ENCODE measurements at regions of chr7 and their contacts with region 1.

Region 1: GRCh38 chr7:24732646-24733413 is 24.4 kb downstream of the GSDME start:
- DNase-seq: peak in 1 of 2 experiments; percentile 71
- ATAC-seq: peak; percentile 89
- H3K4me3 ChIP-seq: no peak overlapping the region
- H3K27ac ChIP-seq: peak overlapping the region; percentile 86 to 89
- H3K4me1 ChIP-seq: peaks cover 42% of the 10 kb centered on the region
- CTCF ChIP-seq: no peak
- EP300 ChIP-seq: no peak
- POLR2A ChIP-seq: no peak
- RAD21 ChIP-seq: no peak

Region 2: DNA sequence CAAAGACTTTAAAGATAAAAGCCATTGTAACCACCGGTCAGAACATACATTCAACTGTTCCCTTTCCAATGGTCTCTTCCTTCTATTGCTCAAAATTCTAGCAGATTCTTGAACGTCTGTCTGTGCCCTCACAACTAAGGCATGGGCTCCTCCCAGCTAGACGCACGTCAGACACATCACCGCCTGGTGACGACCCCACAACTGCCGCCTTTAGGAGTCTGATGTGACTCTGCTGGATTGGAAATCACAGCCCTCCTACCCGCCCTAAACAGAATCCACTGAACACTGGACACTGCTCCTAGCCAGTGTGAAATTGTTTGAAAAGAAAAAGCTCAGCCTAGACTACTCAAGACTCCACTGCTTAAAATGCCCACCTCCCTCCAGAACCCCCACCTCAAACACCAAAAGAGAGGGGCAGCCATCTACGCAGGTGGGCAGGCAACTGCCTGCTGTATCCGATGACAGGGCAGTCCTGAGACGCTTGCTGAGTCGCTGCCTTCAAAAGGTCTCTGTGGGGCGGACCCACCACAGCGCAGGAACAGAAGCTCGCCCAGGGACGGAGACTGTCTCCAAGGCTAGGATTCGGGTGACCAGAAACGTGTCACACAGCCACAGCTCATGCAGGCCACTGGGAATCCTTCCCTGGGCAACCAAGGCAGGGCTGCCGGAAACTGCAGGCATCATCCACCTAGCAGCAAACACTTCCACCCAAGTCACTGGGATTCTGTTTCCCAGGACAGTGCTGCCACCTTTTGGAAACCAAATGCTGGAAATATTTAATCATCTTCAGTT is 10.2 kb before region 1 on chr7:
- CTCF ChIA-PET with region 1: interaction called, 14 read pairs
- POLR2A ChIA-PET with region 1: no interaction called
- DNase-seq: peak in 1 of 2 experiments; percentile 42
- ATAC-seq: peak; percentile 36 to 76; a peak in 4 of 6 replicates
- H3K4me3 ChIP-seq: no peak overlapping the region
- H3K27ac ChIP-seq: peak overlapping the region; percentile 9; a peak in 2 of 6 replicates
- H3K4me1 ChIP-seq: peaks cover 22% of the 10 kb centered on the region
- CTCF ChIP-seq: peak; percentile 26; the same call in 2 of the 3 replicates
- EP300 ChIP-seq: no peak
- POLR2A ChIP-seq: no peak
- RAD21 ChIP-seq: peak; percentile 36 to 61; a peak in 4 of 5 replicates

Region 3: GRCh38 chr7:24778543-24779282 is 45.9 kb after region 1 on chr7:
- CTCF ChIA-PET with region 1: no interaction called
- POLR2A ChIA-PET with region 1: no interaction called
- DNase-seq: no peak
- ATAC-seq: peak in 1 of 2 experiments; percentile 39; a peak in 1 of 6 replicates
- H3K4me3 ChIP-seq: no peak overlapping the region
- H3K27ac ChIP-seq: no peak overlapping the region; a peak in 1 of 6 replicates
- H3K4me1 ChIP-seq: no peaks in the 10 kb centered on the region
- CTCF ChIP-seq: no peak
- EP300 ChIP-seq: no peak
- POLR2A ChIP-seq: no peak
- RAD21 ChIP-seq: no peak

Region 4: GRCh38 chr7:24812310-24812945 is 79.6 kb after region 1 on chr7:
- CTCF ChIA-PET with region 1: no interaction called
- POLR2A ChIA-PET with region 1: no interaction called
- DNase-seq: peak; percentile 40 to 50
- ATAC-seq: peak; percentile 96 to 97
- H3K4me3 ChIP-seq: no peak overlapping the region
- H3K27ac ChIP-seq: no peak overlapping the region
- H3K4me1 ChIP-seq: no peaks in the 10 kb centered on the region
- CTCF ChIP-seq: peak; percentile 87
- EP300 ChIP-seq: no peak
- POLR2A ChIP-seq: no peak
- RAD21 ChIP-seq: peak; percentile 80 to 81

Region 5: DNA sequence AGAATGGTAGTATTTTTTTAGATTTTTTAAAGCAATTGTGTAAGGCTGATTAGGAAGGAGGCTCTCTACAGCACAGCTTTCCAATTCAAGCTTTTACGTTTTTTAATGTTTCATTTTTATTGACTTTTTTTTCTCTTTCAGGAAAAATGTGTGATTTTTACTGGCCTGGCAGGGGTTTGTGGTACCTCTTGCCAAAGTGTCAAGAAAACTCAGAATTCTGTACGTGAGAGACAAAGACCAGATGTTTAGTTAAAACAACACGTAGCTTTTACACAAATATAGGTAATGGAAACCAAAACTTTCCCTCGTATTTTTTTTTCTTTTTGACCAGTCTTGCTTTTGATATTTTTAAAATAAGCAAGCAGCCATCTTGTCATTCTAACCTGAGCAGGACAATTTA is 501.5 kb after region 1 on chr7:
- CTCF ChIA-PET with region 1: no interaction called
- POLR2A ChIA-PET with region 1: no interaction called
- DNase-seq: no peak
- ATAC-seq: no peak
- H3K4me3 ChIP-seq: no peak overlapping the region
- H3K27ac ChIP-seq: no peak overlapping the region
- H3K4me1 ChIP-seq: no peaks in the 10 kb centered on the region
- CTCF ChIP-seq: no peak
- EP300 ChIP-seq: no peak
- POLR2A ChIP-seq: no peak
- RAD21 ChIP-seq: no peak